GM12878 (cell line): ENCODE measurements at regions of chrX and their contacts with region 1.

Region 1: GRCh38 chrX:71652405-71652804 is 14.9 kb upstream of the LOC101059915 start:
- DNase-seq: no peak
- ATAC-seq: peak; percentile 77
- H3K4me3 ChIP-seq: no peak overlapping the region
- H3K27ac ChIP-seq: no peak overlapping the region
- H3K4me1 ChIP-seq: 0 out of 2 replicates have a peak, but pooled peaks cover 3% of the 10 kb centered on the region
- H3K27me3 ChIP-seq: no peaks in the 10 kb centered on the region
- CTCF ChIP-seq: peak; percentile 64 to 73 (median 73)
- EP300 ChIP-seq: no peak
- POLR2A ChIP-seq: no peak
- RAD21 ChIP-seq: peak; percentile 89

Region 2: DNA sequence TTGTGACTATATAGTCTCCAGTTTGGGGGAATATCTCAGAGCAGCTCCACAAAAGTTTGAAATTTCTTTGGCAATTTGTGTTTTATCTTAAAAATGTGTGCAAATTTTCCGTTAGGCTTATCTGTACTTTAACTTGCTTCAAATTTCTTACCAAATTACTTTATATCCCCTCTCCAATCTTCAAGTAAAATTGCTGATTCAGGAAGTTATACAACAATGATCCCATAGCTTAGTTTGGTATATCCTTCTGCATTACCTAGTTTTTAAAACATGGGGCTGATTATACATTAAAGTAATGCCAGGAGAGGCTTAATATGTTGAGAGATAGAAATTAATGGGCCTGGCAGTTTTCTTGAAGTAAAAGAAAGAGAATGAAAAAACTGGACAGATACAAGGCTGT is 219.7 kb before region 1 on chrX:
- CTCF ChIA-PET with region 1: interaction called, 6 read pairs
- POLR2A ChIA-PET with region 1: no interaction called
- RAD21 ChIA-PET with region 1: no interaction called
- SMC1A ChIA-PET with region 1: no interaction called
- in situ Hi-C with region 1: no loop called
- intact Hi-C with region 1: loop called (anchors 5 kb)
- DNase-seq: no peak
- ATAC-seq: no peak
- H3K4me3 ChIP-seq: no peak overlapping the region
- H3K27ac ChIP-seq: no peak overlapping the region
- H3K4me1 ChIP-seq: no peaks in the 10 kb centered on the region
- H3K27me3 ChIP-seq: no peaks in the 10 kb centered on the region
- CTCF ChIP-seq: no peak
- EP300 ChIP-seq: no peak
- POLR2A ChIP-seq: no peak
- RAD21 ChIP-seq: no peak

Region 3: GRCh38 chrX:71556036-71556435 is 96.4 kb before region 1 on chrX:
- CTCF ChIA-PET with region 1: interaction called, 5 read pairs
- POLR2A ChIA-PET with region 1: interaction called, 3 read pairs
- RAD21 ChIA-PET with region 1: no interaction called
- SMC1A ChIA-PET with region 1: no interaction called
- in situ Hi-C with region 1: loop called (anchors 5 kb)
- intact Hi-C with region 1: no loop called
- DNase-seq: no peak
- ATAC-seq: no peak
- H3K4me3 ChIP-seq: no peak overlapping the region
- H3K27ac ChIP-seq: no peak overlapping the region
- H3K4me1 ChIP-seq: no peaks in the 10 kb centered on the region
- H3K27me3 ChIP-seq: no peaks in the 10 kb centered on the region
- CTCF ChIP-seq: no peak
- EP300 ChIP-seq: no peak
- POLR2A ChIP-seq: no peak
- RAD21 ChIP-seq: no peak

Region 4: GRCh38 chrX:71579136-71579989 is 73.0 kb before region 1 on chrX:
- CTCF ChIA-PET with region 1: interaction called, 3 read pairs
- POLR2A ChIA-PET with region 1: no interaction called
- RAD21 ChIA-PET with region 1: no interaction called
- SMC1A ChIA-PET with region 1: interaction called, 4 read pairs
- in situ Hi-C with region 1: no loop called
- intact Hi-C with region 1: loop called (anchors 2 kb)
- DNase-seq: no peak
- ATAC-seq: no peak
- H3K4me3 ChIP-seq: no peak overlapping the region
- H3K27ac ChIP-seq: no peak overlapping the region
- H3K4me1 ChIP-seq: no peaks in the 10 kb centered on the region
- H3K27me3 ChIP-seq: no peaks in the 10 kb centered on the region
- CTCF ChIP-seq: no peak
- EP300 ChIP-seq: no peak
- POLR2A ChIP-seq: no peak
- RAD21 ChIP-seq: no peak

Region 5: DNA sequence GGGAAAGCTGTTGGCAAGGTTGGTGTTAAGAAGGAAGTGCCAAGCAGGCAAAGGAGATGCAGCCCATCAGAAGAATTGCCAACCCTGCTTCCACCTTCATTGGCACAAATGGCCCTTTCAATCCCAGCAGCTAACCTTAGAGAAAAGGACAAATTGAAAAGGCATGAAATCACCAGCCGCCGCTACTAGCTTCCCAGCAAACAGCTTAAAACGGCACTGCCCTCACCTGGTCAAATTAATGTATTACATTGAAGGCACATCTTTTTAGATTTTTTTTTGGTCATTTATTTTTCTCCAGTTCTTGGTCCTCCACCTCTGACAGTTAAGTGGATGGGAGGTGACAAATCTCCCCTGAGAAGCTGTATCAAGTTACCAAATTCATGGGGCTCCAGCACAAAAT is 207.2 kb after region 1 on chrX:
- CTCF ChIA-PET with region 1: interaction called, 3 read pairs
- POLR2A ChIA-PET with region 1: no interaction called
- RAD21 ChIA-PET with region 1: no interaction called
- SMC1A ChIA-PET with region 1: no interaction called
- in situ Hi-C with region 1: loop called (anchors 25 kb)
- intact Hi-C with region 1: no loop called
- DNase-seq: no peak
- ATAC-seq: peak; percentile 55
- H3K4me3 ChIP-seq: no peak overlapping the region
- H3K27ac ChIP-seq: no peak overlapping the region
- H3K4me1 ChIP-seq: no peaks in the 10 kb centered on the region
- H3K27me3 ChIP-seq: no peaks in the 10 kb centered on the region
- CTCF ChIP-seq: peak; percentile 56 to 65 (median 59)
- EP300 ChIP-seq: no peak
- POLR2A ChIP-seq: no peak
- RAD21 ChIP-seq: peak; percentile 72